Posterior vena cava (tissue), 2 donors: ENCODE measurements at regions of chr10 and their contacts with region 1.

Region 1: DNA sequence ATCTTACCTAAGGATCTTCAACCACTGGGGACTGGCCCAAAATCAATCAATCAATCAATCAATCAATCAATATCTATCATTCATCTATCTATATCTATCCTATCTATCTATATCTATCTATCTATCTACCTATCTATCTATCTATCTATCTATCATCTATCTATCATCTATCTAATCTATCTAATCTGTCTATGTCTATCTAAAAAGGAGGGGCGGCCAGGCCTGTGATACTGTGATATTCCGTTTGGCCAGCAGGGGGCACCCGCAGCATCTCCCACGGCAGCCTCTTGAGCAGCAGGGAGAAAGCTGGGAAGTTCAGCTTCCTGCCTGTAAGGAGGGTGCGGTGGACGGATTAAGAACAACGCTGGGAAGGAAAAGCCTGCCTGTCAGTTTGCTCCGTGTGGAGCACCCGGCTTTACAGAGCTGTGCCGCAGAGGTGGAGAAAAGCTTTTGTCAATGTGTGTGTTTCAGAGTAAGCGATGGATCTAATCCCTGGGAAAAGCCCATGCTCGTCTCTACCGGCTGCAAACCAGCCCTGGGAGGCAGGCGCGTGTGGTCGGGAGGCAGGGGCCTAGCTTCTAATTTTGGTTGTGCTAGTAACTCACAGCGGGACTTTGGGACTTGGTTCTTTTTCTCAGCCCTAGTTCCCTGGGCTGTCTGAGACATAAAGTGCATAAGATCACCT is 125.0 kb downstream of the SH2D4B start:
- DNase-seq: peak; percentile 95

Region 2: DNA sequence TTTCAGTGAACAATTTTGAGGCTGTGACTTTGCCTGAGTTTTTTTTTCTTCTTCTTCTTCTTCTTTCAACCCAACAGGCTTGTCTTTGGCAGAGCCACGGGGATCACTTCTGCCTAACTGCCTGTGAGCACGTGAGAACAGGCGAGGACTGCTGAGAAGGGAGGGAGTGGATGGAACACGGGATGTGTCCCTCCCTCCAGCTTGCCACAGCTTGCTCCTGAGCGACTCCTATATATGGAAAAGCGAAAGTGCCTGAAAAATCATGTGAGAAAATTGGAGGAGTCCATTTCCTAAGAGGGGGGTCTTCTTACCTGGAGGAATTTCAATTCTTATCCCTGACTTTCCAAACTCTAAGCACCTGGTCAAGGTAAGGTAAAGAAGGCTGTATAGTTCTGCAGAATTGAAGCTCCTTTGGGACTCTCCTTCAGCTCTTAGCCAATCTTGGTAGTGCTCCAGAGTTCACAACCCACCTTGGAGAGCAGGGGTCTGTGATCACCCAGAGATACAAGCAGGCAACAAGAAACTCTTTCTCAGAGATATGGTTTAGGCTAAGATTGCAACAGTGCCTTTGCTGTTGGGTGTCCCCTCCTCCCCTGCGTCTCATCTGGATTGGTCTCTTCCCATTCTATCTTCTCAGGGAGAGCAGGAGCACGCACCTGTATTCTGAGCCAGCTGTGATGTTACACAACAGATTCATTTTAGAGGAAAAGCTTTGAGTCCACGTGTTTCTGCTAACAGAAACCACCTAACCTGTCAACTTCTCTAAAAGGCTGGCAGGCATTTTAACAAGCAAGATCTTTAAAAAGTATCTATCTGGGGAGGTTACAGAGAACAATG is 373.1 kb before region 1 on chr10 and contains the start of gene MAT1A:
- intact Hi-C with region 1: no loop called
- DNase-seq: no peak
- total RNA-seq, gene MAT1A: 0.37 TPM in 1 of 2 donors, not detected in the other

Region 3: DNA sequence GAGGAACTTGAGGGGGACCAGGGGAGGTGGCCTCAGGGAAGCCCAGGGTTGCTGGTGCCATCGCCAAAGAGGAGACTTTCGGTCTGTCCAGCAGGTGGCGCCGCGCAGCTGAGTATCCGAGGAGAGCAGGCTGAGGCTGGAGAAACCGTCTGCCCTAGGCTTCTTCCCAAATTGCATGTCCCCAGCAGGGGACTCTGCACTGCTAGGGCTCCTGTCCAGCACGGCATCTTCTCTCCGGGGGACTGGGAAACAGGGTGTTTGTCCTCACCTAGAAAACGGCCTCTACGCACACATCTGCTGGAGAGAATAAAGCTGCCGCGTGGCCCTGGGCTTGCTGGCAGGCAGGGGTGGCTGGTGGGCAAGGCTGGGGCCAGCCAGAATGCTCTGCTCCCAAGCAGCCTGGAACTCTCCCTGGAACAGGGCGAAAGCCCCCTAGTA is 36.9 kb after region 1 on chr10:
- intact Hi-C with region 1: loop called in 1 of 2 experiments (anchors 2 kb)
- DNase-seq: peak; percentile 95

Region 4: GRCh38 chr10:80719935-80720334 is 57.2 kb after region 1 on chr10:
- intact Hi-C with region 1: no loop called
- DNase-seq: no peak

Region 5: GRCh38 chr10:80871083-80871482 is 208.4 kb after region 1 on chr10:
- intact Hi-C with region 1: no loop called
- DNase-seq: no peak